ENCODE measurements at regions of chr12 and their contacts with region 1.

Region 1: DNA sequence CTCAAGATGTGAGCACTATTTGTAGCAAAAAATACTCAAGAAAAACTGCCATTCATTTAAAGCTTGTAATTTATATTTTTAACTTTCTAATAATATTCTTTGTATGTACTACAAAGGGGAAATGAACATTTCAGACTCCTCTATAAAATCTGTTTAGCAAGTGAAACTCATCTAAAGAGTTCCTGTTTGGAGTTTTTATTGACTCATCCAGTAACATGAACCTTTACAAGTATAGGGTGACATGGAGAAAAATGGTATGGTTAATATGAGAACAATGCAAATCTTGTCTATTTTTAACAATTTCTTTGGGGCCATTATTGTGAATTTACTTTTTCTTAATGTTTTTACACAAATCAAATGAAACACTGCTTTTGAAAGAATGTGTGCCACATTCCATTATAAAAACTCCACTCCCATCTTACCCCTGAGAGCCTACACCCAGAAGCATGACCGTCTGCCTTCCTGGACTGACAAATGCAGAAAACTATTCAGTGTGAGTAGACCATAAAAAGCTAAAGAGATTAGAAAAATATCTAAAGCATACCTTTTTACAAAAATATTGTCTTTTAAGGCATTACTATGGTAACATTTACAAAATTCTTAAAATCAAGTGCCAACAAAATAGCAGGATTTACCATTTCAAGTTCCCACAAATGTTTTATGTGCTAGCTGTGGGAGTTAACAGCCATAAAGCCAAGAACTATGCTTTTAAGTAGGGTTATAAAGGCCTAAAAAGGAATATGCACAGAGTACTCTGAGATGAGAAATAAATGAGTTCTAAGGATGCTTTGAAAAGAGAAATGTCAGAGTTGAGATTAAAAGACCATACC is 144.0 kb downstream of the ADAMTS20 start:
- DNase-seq: no peak
- ATAC-seq: no peak
- H3K4me3 ChIP-seq: no peak overlapping the region
- H3K27ac ChIP-seq: no peak overlapping the region
- H3K4me1 ChIP-seq: no peaks in the 10 kb centered on the region
- H3K27me3 ChIP-seq: no peaks in the 10 kb centered on the region
- CTCF ChIP-seq: no peak

Region 2: DNA sequence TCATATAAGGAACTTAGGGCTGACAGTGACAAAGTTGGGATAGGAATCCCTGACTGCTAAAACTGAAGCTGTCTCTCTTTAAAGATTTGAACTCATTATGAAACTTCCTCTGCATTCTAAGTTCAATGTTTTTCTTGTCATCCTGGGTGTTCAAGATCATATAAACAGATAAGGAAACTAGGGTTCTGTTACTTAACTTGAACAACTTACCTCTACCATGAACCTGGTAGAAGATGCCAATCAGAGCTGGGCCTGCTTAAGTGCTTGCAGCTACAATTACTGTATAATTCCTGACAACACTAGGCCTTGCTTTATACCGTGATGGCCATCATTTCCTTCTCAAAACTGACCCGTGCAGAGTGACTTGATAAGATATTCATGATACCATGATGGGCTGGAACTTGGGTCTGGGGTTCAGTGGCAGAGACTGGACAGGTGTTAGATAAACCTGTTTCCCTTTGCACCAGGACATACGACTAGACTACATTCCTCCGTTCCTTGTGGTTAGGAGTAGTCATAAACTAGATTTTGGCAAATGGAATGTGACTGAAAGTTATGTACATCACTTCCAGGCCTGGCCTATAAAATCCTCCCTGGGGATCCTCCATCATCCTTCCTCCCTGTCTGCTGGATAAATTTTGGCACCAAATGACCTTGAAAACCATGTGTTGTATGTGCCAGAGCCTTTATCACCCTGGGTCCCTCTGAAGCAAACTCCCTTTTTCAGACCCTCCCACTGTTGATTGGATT is 646.3 kb before region 1 on chr12:
- CTCF ChIA-PET with region 1: no interaction called
- POLR2A ChIA-PET with region 1: interaction called, 14 read pairs
- in situ Hi-C with region 1: no loop called
- intact Hi-C with region 1: no loop called
- DNase-seq: no peak
- ATAC-seq: no peak
- H3K4me3 ChIP-seq: no peak overlapping the region
- H3K27ac ChIP-seq: peak overlapping the region; percentile 48; the same call in 1 of the 2 replicates
- H3K4me1 ChIP-seq: peaks cover 7% of the 10 kb centered on the region; the same call in 1 of the 2 replicates
- H3K27me3 ChIP-seq: no peaks in the 10 kb centered on the region
- CTCF ChIP-seq: no peak

Region 3: GRCh38 chr12:43551971-43552559 is 144.0 kb after region 1 on chr12 and contains the start of gene ADAMTS20:
- CTCF ChIA-PET with region 1: no interaction called
- POLR2A ChIA-PET with region 1: interaction called, 16 read pairs
- in situ Hi-C with region 1: no loop called
- intact Hi-C with region 1: no loop called
- DNase-seq: no peak
- ATAC-seq: no peak
- H3K4me3 ChIP-seq: no peak within 1 kb of the TSS; a peak in 1 of 4 replicates
- H3K27ac ChIP-seq: no peak within 1 kb of the TSS
- H3K4me1 ChIP-seq: no peaks in the 10 kb centered on the region
- H3K27me3 ChIP-seq: no peaks in the 10 kb centered on the region
- CTCF ChIP-seq: no peak
- total RNA-seq, gene ADAMTS20: not detected

Measured in Panc1 (cell line).